ENCODE measurements at regions of chr9 and their contacts with region 1.

Region 1: GRCh38 chr9:127396808-127397497 is at the start of gene SLC2A8:
- DNase-seq: peak; percentile 99
- ATAC-seq: peak; percentile 95
- H3K4me3 ChIP-seq: peak within 1 kb of the TSS; percentile 85
- H3K27ac ChIP-seq: peak within 1 kb of the TSS; percentile 86
- H3K4me1 ChIP-seq: peaks cover 16% of the 10 kb centered on the region
- H3K27me3 ChIP-seq: no peaks in the 10 kb centered on the region
- CTCF ChIP-seq: no peak
- total RNA-seq, gene SLC2A8: 21.8 TPM

Region 2: DNA sequence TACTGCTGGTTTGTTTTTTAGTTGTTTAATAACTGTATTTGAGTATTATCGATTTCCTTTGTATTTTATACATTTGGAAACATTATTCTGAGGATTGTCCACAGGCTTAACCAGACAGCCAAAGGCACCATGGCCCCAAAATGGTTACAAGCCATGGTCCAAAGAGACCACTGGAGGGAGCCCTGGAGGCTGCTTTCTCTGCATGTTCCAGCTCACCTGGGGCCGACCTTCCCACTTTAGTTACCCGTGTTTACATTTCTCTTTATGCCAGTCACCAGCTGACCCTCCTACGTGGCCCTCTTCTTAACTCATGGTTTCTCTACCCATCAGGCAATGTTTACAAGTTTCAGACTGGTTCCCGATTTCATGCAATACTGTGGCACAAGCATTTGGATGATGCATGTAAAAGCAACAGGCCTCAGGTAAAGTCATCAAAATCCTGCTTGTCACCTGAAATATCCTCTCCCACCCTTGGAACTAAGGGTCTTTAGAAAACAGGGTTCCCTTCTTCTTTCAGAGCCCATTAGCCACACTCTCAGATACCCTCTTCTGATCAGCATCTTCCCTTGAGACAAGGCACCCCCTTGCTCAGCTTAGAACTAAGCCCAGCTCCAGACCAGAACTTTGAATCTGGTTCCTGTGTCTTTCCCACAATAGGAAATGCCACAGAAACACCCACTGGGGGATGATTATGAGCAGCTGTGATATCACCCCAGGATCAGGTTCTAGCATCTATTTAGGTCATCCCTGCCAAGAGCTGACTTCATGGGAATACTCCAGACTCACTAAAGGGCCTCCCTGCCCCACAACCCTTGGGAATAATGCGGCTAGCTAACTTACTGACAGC is 182.3 kb before region 1 on chr9:
- intact Hi-C with region 1: loop called (anchors 10 kb)
- DNase-seq: peak; percentile 69
- ATAC-seq: peak; percentile 84
- H3K4me3 ChIP-seq: no peak overlapping the region
- H3K27ac ChIP-seq: no peak overlapping the region
- H3K4me1 ChIP-seq: peaks cover 4% of the 10 kb centered on the region
- H3K27me3 ChIP-seq: no peaks in the 10 kb centered on the region
- CTCF ChIP-seq: peak; percentile 79

Region 3: DNA sequence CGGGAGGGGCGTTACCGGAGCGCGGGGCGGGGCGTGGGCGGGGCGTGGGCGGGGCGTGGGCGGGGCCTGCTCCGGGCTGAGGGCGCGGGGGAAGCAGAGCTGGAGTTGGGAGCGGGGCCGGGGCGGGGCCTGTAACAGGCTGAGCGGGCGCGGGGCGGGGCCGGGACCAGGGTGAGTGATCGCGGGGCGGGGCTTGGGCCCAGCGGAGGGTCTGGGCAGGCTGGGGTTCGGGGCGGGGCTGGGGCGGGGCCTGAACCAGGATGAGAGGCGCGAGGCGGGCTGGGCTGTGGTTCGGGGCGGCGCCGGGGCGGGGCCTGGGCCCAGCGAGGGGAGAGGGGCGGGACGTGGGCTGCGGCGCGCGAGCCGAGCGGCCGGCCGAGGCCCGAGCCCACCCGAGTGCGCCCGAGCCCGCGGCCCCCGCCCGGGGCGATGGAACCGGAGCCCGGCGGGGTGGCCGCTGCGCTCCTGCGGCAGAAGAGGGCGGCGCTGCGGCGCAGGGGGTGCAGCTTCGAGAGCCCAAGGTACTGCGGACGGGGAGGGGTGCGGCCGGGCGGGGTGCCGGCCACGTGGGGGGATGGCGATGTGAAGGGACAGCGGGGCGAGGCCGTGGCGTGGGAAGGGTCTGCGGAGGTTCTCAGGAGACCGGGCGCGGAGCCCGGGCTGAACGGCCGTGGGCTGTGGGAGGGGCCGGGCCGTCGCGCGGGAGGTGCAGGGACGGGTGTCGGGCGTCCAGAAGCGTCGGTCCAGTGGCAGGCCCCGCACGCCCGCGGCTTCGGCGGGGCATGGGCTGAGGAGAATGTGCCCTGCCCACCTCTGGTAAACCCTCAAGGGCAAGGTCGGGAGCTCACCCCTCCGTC is 171.8 kb before region 1 on chr9:
- intact Hi-C with region 1: no loop called
- DNase-seq: peak; percentile 98
- ATAC-seq: peak; percentile 95
- H3K4me3 ChIP-seq: peak overlapping the region; percentile 67
- H3K27ac ChIP-seq: peak overlapping the region; percentile 51
- H3K4me1 ChIP-seq: peaks cover 3% of the 10 kb centered on the region
- H3K27me3 ChIP-seq: no peaks in the 10 kb centered on the region
- CTCF ChIP-seq: no peak

Measured in upper lobe of right lung (tissue), 1 donor.